Mammary epithelial cell (primary cell): ENCODE measurements at regions of chr19 and their contacts with region 1.

Region 1: GRCh38 chr19:6424939-6425731 is 524 bp upstream of the KHSRP start:
- DNase-seq: peak; percentile 100
- H3K4me3 ChIP-seq: peak overlapping the region; percentile 6 to 21 (median 7)
- H3K27ac ChIP-seq: peak overlapping the region; percentile 26
- H3K4me1 ChIP-seq: peaks cover 19% of the 10 kb centered on the region
- H3K27me3 ChIP-seq: no peaks in the 10 kb centered on the region
- CTCF ChIP-seq: no peak

Region 2: DNA sequence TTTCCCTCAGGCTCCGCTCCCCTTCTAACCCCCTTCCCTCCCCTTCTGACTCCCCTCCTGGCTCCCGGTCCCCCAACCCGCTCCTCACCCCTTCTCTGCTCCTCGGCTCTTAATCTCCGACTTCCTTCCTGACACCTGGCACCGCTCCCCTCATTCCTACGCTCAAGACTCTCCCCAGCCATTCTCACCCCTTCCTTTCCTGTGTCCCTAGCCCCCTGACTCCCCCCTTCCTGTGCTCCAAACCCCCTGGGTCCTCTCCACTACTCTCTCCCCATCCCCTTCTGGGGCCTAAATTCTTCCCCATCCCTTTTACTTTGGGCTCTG is 63.1 kb before region 1 on chr19:
- CTCF ChIA-PET with region 1: no interaction called
- dilution Hi-C with region 1: no loop called
- in situ Hi-C with region 1: no loop called
- intact Hi-C with region 1: loop called (anchors 1 kb)
- DNase-seq: no peak
- H3K4me3 ChIP-seq: peak overlapping the region; percentile 70 to 92 (median 82)
- H3K27ac ChIP-seq: peak overlapping the region; percentile 42
- H3K4me1 ChIP-seq: peaks cover 13% of the 10 kb centered on the region
- H3K27me3 ChIP-seq: no peaks in the 10 kb centered on the region
- CTCF ChIP-seq: no peak

Region 3: GRCh38 chr19:6372594-6373095 is 52.5 kb before region 1 on chr19 and contains the start of gene ALKBH7:
- CTCF ChIA-PET with region 1: no interaction called
- dilution Hi-C with region 1: no loop called
- in situ Hi-C with region 1: no loop called
- intact Hi-C with region 1: loop called (anchors 1 kb)
- DNase-seq: peak; percentile 99
- H3K4me3 ChIP-seq: peak within 1 kb of the TSS; percentile 85 to 95 (median 93)
- H3K27ac ChIP-seq: peak within 1 kb of the TSS; percentile 35
- H3K4me1 ChIP-seq: peaks cover 8% of the 10 kb centered on the region
- H3K27me3 ChIP-seq: no peaks in the 10 kb centered on the region
- CTCF ChIP-seq: no peak
- total RNA-seq, gene ALKBH7: 33.8 to 38.6 TPM